PC-9 (cell line): ENCODE measurements at regions of chr7 and their contacts with region 1.

Region 1: GRCh38 chr7:151110941-151111645 is 24.8 kb downstream of the AGAP3 start:
- DNase-seq: peak; percentile 52 to 82
- H3K4me3 ChIP-seq: no peak overlapping the region
- H3K27ac ChIP-seq: no peak overlapping the region
- H3K4me1 ChIP-seq: peaks cover 26% of the 10 kb centered on the region
- H3K27me3 ChIP-seq: no peaks in the 10 kb centered on the region
- CTCF ChIP-seq: peak; percentile 92

Region 2: GRCh38 chr7:150448789-150449147 is 662.3 kb before region 1 on chr7:
- CTCF ChIA-PET with region 1: no interaction called
- POLR2A ChIA-PET with region 1: no interaction called
- intact Hi-C with region 1: loop called (anchors 10 kb)
- DNase-seq: peak in 1 of 2 experiments; percentile 73
- H3K4me3 ChIP-seq: no peak overlapping the region
- H3K27ac ChIP-seq: no peak overlapping the region
- H3K4me1 ChIP-seq: no peaks in the 10 kb centered on the region
- H3K27me3 ChIP-seq: peaks cover 80% of the 10 kb centered on the region
- CTCF ChIP-seq: peak; percentile 95

Region 3: GRCh38 chr7:150898475-150899011 is 212.6 kb before region 1 on chr7:
- CTCF ChIA-PET with region 1: no interaction called
- POLR2A ChIA-PET with region 1: interaction called, 5 read pairs
- intact Hi-C with region 1: loop called (anchors 1 kb)
- DNase-seq: peak in 1 of 2 experiments; percentile 82
- H3K4me3 ChIP-seq: no peak overlapping the region
- H3K27ac ChIP-seq: no peak overlapping the region
- H3K4me1 ChIP-seq: no peaks in the 10 kb centered on the region
- H3K27me3 ChIP-seq: peaks cover 29% of the 10 kb centered on the region
- CTCF ChIP-seq: peak; percentile 95

Region 4: GRCh38 chr7:150974468-150975391 is 136.4 kb before region 1 on chr7:
- CTCF ChIA-PET with region 1: no interaction called
- POLR2A ChIA-PET with region 1: no interaction called
- intact Hi-C with region 1: loop called (anchors 2 kb)
- DNase-seq: peak in 1 of 2 experiments; percentile 67
- H3K4me3 ChIP-seq: peak overlapping the region; percentile 65
- H3K27ac ChIP-seq: no peak overlapping the region
- H3K4me1 ChIP-seq: 0 out of 2 replicates have a peak, but pooled peaks cover 4% of the 10 kb centered on the region
- H3K27me3 ChIP-seq: peaks cover 52% of the 10 kb centered on the region
- CTCF ChIP-seq: peak; percentile 42; the same call in 1 of the 2 replicates

Region 5: GRCh38 chr7:151057989-151058780 is 52.9 kb before region 1 on chr7:
- CTCF ChIA-PET with region 1: no interaction called
- POLR2A ChIA-PET with region 1: no interaction called
- intact Hi-C with region 1: loop called (anchors 1 kb)
- DNase-seq: peak; percentile 99 to 100
- H3K4me3 ChIP-seq: peak overlapping the region; percentile 82
- H3K27ac ChIP-seq: peak overlapping the region; percentile 41
- H3K4me1 ChIP-seq: peaks cover 43% of the 10 kb centered on the region
- H3K27me3 ChIP-seq: no peaks in the 10 kb centered on the region
- CTCF ChIP-seq: no peak

Region 6: DNA sequence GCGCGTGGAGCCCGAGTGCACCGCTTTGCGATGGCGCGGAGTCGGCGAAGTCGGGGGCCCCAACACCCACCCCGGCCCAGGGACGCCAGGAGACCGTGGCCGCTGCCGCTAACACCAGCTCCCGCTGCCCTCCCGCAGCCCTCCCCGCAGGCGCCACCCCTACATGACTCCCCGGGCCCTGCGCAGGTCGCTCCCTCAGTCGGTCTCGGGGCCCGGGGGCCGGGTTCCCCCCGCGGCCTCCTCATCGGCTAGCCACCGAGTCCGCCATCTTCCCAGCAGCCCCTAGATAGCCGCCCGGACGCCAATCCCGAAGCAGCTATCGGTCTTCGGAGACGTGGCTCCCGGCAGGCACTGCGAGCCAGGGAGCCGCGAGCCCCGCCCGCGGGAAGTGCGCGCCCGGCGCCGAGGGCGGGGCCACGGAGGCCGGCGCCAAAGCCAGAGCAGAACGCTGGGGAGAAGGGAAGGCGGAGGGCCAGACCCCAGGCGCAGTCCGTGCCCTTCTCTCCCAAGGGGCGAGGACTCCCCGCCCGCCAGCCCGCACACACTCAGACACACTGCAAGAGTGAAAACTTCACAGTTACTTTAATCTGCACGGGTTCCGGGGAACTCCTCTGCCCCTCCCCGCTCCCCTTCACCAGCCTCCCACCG is 30.4 kb before region 1 on chr7 and contains the start of gene FASTK:
- CTCF ChIA-PET with region 1: no interaction called
- POLR2A ChIA-PET with region 1: no interaction called
- intact Hi-C with region 1: no loop called
- DNase-seq: peak; percentile 82 to 93
- H3K4me3 ChIP-seq: peak within 1 kb of the TSS; percentile 89
- H3K27ac ChIP-seq: peak within 1 kb of the TSS; percentile 70
- H3K4me1 ChIP-seq: peaks cover 35% of the 10 kb centered on the region
- H3K27me3 ChIP-seq: no peaks in the 10 kb centered on the region
- CTCF ChIP-seq: no peak
- total RNA-seq, gene FASTK: 104 and 126 TPM in 2 replicates

Region 7: DNA sequence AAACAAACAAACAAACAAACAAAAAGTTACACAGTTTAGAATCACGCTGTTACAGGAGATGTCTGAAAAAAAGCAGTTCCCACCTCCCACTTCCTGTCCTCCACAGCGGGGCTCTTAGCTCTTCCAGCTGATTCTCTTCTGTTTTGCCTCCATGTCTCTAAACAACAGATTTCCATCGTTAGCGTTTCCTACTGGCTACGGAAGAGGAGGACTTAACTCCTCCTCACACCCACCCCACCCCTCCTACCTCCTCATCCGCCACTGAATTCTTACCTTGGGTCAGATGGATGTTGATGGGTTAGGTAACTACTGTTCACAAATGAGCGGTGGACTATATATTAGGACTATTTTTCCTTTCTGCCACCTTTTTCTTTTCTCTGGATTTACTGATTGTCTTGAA is 193.8 kb after region 1 on chr7:
- CTCF ChIA-PET with region 1: interaction called, 13 read pairs
- POLR2A ChIA-PET with region 1: no interaction called
- intact Hi-C with region 1: no loop called
- DNase-seq: no peak
- H3K4me3 ChIP-seq: no peak overlapping the region
- H3K27ac ChIP-seq: no peak overlapping the region
- H3K4me1 ChIP-seq: no peaks in the 10 kb centered on the region
- H3K27me3 ChIP-seq: peaks cover 96% of the 10 kb centered on the region
- CTCF ChIP-seq: no peak